ENCODE measurements at regions of chr19 and their contacts with region 1.

Region 1: DNA sequence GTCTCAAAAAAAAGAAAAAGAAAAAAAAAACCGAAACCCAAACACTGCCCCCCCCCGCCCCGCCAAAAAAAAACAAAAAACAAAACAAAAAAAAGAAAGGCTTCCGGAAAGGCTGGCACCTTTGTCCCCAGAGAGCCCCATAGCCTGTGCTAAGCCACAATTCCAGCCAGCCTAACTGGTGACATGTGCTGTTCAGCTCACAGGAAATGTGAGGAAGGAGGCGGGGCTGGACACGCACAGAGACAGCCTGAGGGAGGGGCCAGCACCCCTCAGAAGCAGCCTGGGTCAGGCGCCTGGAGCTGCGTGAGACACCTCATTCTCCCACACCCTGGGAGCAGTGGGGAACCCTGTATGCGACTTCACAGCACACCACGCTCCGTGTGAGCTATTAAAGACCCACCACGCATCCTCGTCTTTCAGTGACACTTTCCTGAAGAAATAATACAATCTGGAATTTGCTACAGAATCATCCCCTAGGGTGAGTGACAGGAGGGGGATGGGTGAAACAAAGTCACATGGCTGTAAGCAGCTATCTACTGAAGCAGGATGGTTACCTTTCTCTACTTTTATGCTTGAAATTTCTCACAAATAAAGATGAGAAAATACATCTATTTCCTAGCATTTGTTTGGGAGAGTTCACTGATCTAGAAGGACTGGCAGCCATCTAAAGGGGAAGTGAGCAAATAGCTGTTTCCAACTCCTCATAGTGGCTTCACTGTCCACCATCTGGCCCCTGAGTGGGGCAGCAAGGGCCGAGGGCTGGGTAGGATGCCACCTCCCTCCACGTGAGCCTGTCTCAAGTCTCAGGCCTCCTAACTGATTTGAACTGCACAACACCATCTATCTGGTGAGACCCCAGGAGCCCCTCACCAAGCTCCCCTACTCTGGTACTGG is 12.3 kb upstream of the SLC35E1 start:
- DNase-seq: peak; percentile 80
- H3K4me3 ChIP-seq: no peak overlapping the region
- H3K27ac ChIP-seq: peak overlapping the region; percentile 54
- H3K4me1 ChIP-seq: peaks cover 39% of the 10 kb centered on the region
- H3K27me3 ChIP-seq: no peaks in the 10 kb centered on the region
- CTCF ChIP-seq: no peak
- POLR2A ChIP-seq: peak; percentile 28

Region 2: GRCh38 chr19:16572332-16573211 is 11.9 kb before region 1 on chr19 and contains the start of gene SLC35E1:
- CTCF ChIA-PET with region 1: interaction called, 10 read pairs
- POLR2A ChIA-PET with region 1: no interaction called
- dilution Hi-C with region 1: no loop called
- intact Hi-C with region 1: no loop called
- DNase-seq: peak; percentile 93
- H3K4me3 ChIP-seq: peak within 1 kb of the TSS; percentile 64 to 75 (median 73)
- H3K27ac ChIP-seq: peak within 1 kb of the TSS; percentile 73
- H3K4me1 ChIP-seq: peaks cover 16% of the 10 kb centered on the region
- H3K27me3 ChIP-seq: no peaks in the 10 kb centered on the region
- CTCF ChIP-seq: no peak
- POLR2A ChIP-seq: no peak
- total RNA-seq, gene SLC35E1: 30.4 and 37.5 TPM in 2 replicates

Region 3: DNA sequence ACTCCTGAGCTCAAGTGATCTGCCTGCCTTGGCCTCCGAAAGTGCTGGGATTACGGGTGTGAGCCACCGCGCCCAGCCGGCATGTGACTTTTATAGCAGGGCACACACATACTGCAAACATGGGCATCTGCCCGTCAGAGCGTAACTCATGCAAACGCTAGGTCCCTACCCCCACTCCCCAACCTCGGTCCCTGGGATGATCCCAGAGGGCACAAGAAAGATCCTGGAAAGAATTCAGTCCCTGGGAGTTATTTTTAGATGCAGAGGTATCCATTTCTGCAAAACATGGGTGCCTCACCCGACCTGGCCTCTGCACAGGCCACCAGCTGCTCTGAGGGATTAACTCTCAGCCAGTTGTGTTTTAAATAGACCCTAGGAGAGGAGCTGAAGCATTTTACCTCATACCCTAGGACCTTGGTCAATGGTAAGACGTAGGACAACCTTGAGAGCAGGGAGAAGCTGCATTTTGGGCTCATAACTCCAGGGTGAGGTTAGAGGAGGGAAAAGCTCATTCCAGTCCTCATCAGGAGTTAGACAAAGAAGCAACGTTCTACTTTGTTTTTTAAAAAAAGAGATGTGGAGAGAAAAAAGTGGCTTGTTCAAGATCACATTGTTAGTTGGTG is 87.3 kb after region 1 on chr19:
- CTCF ChIA-PET with region 1: no interaction called
- POLR2A ChIA-PET with region 1: no interaction called
- dilution Hi-C with region 1: no loop called
- intact Hi-C with region 1: no loop called
- DNase-seq: no peak
- H3K4me3 ChIP-seq: no peak overlapping the region
- H3K27ac ChIP-seq: no peak overlapping the region
- H3K4me1 ChIP-seq: no peaks in the 10 kb centered on the region
- H3K27me3 ChIP-seq: no peaks in the 10 kb centered on the region
- CTCF ChIP-seq: no peak
- POLR2A ChIP-seq: no peak

Measured in endothelial cell of umbilical vein (primary cell).